ENCODE measurements at regions of chr19 and their contacts with region 1.

Region 1: GRCh38 chr19:11482384-11483050 is 1.7 kb upstream of the ELAVL3 start:
- DNase-seq: peak; percentile 84 to 93 (median 89)
- H3K4me3 ChIP-seq: peak overlapping the region; percentile 41 to 95 (median 74)
- H3K27ac ChIP-seq: peak overlapping the region; percentile 73 to 100 (median 98)
- H3K27me3 ChIP-seq: no peaks in the 10 kb centered on the region
- CTCF ChIP-seq: peak; percentile 82 to 100 (median 98)

Region 2: GRCh38 chr19:11137542-11138384 is 344.8 kb before region 1 on chr19:
- intact Hi-C with region 1: loop called in 1 of 2 experiments (anchors 5 kb)
- DNase-seq: peak; percentile 61 to 88 (median 80)
- H3K4me3 ChIP-seq: peak overlapping the region; percentile 29 to 70 (median 54)
- H3K27ac ChIP-seq: peak overlapping the region; percentile 53 to 95 (median 87)
- H3K27me3 ChIP-seq: no peaks in the 10 kb centered on the region
- CTCF ChIP-seq: peak; percentile 69 to 96 (median 88)

Region 3: GRCh38 chr19:11374433-11375142 is 107.9 kb before region 1 on chr19 and contains the start of gene SWSAP1:
- intact Hi-C with region 1: loop called in 1 of 2 experiments (anchors 5 kb)
- DNase-seq: peak; percentile 92 to 99 (median 99)
- H3K4me3 ChIP-seq: peak within 1 kb of the TSS; percentile 51 to 99 (median 77)
- H3K27ac ChIP-seq: peak within 1 kb of the TSS; percentile 74 to 99 (median 94)
- H3K27me3 ChIP-seq: no peaks in the 10 kb centered on the region
- CTCF ChIP-seq: peak in 16 of 56 donors; percentile 3 to 51 (median 20)
- total RNA-seq, gene SWSAP1: 0.29 to 2.7 (median 1.1) TPM in 119 of 120 experiments, not detected in the other

Region 4: DNA sequence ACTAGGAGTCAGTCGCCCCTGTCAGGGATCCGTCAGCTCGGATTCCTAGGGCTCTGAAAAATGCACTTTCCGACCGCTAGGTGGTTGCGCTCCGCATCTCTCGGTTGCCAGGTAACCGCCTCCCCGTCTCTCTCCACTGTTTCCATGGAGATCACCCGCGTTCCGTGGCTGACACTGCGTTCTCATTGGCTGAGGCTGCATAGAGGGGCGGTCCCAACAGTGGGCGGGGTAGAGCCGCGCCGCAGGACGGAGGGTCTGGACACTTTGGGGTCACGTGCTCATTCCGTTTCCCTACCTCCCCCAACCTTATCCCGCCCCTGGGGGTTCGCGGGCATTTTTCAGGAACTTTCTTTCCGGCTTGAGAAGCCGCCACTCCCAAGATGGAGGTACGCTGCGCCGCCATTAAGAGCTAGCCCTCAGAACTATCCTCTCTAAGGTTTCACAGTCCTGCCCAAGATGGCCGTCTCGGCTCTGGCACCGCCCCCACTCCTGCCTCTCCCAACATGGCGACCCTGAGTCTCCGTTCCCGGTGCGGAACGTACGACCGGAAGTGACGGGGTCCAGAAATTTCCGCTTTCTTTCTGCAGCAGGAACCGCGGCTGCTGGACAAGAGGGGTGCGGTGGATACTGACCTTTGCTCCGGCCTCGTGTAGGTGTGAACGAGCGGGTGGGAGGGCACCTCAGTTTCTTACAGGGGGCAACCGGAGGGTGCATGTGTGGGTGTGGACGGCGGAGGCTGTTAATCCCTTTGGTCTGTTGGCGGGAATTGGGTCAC is 47.3 kb before region 1 on chr19 and contains the starts of genes ODAD3 and PRKCSH:
- intact Hi-C with region 1: loop called (anchors 1 kb)
- DNase-seq: peak; percentile 98 to 100 (median 100)
- H3K4me3 ChIP-seq: peak within 1 kb of the TSS; percentile 69 to 96 (median 85)
- H3K27ac ChIP-seq: peak within 1 kb of the TSS; percentile 69 to 99 (median 96)
- H3K27me3 ChIP-seq: no peaks in the 10 kb centered on the region
- CTCF ChIP-seq: peak; percentile 65 to 98 (median 91)
- total RNA-seq, gene ODAD3: 1.5 to 15.0 (median 4.5) TPM
- total RNA-seq, gene PRKCSH: 166 to 389 (median 218) TPM

Region 5: GRCh38 chr19:11457115-11457514 is 25.4 kb before region 1 on chr19:
- intact Hi-C with region 1: loop called (anchors 1 to 2 kb)
- DNase-seq: peak in 9 of 10 donors; percentile 85 to 94 (median 92)
- H3K4me3 ChIP-seq: peak overlapping the region in 3 of 59 donors; percentile 5 to 34 (median 7)
- H3K27ac ChIP-seq: peak overlapping the region; percentile 71 to 100 (median 97)
- H3K27me3 ChIP-seq: no peaks in the 10 kb centered on the region
- CTCF ChIP-seq: peak in 17 of 56 donors; percentile 5 to 52 (median 20)

Region 6: GRCh38 chr19:11496391-11497163 is 14.1 kb after region 1 on chr19:
- intact Hi-C with region 1: no loop called
- DNase-seq: peak in 8 of 10 donors; percentile 41 to 78 (median 64)
- H3K4me3 ChIP-seq: no peak overlapping the region
- H3K27ac ChIP-seq: peak overlapping the region in 37 of 59 donors; percentile 1 to 88 (median 51)
- H3K27me3 ChIP-seq: no peaks in the 10 kb centered on the region
- CTCF ChIP-seq: peak in 55 of 56 donors; percentile 20 to 74 (median 62)